ENCODE measurements at regions of chr5 and their contacts with region 1.

Region 1: DNA sequence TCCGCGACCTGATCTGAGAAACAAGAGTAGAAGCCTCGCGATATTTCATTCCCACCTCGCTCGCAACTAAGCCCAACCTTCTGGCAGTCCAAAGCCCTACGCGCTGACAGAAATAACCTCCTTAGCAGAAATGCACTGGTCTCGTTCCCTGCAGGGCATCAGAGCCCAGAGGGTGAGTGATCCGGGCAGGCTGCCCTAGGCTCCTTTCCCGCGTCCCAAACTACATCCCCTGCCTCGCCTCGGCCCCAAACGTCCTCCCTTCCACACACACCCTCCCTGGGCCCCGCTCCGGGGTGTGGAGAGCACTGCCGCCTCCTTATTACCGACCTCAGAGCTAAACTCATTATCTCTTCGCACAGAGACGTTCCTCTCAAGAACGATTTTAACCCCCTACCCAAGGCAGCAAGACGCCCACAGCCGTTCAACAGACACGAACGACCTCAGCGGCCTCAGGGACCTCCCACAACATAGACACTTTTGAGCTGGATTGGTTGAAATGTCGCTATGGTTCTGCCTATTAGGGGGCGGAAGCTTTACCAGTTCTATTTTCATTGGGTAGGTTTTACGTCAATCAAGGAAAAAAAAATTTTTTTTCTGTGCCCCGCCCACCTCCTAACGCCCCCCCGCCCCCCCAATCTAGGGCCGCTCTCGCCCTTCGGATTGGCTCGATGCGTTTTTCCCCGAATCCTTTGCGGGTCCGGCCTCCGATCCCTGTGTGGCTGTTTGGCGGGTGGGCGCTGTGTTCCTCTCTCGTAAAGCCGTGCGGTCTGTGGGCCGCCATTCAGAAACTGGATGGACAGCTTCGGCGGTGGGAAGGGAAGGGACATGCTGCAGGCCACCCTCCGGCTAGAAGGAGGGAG is at the start of gene CETN3:
- DNase-seq: peak; percentile 94
- H3K4me3 Mint-ChIP-seq: no peak within 1 kb of the TSS
- H3K27ac Mint-ChIP-seq: no peak within 1 kb of the TSS
- H3K4me1 Mint-ChIP-seq: peaks cover 16% of the 10 kb centered on the region
- H3K27me3 Mint-ChIP-seq: no peaks in the 10 kb centered on the region
- total RNA-seq, gene CETN3: 49.8 to 51.8 TPM

Region 2: GRCh38 chr5:90529194-90529938 is 119.8 kb after region 1 on chr5 and contains the start of gene LYSMD3:
- CTCF ChIA-PET with region 1: interaction called, 9 read pairs
- POLR2A ChIA-PET with region 1: interaction called, 4 read pairs
- intact Hi-C with region 1: loop called (anchors 1 kb)
- DNase-seq: peak; percentile 97
- H3K4me3 Mint-ChIP-seq: peak within 1 kb of the TSS; percentile 100
- H3K27ac Mint-ChIP-seq: peak within 1 kb of the TSS; percentile 96
- H3K4me1 Mint-ChIP-seq: peaks cover 24% of the 10 kb centered on the region
- H3K27me3 Mint-ChIP-seq: peaks cover 10% of the 10 kb centered on the region
- total RNA-seq, gene LYSMD3: 12.6 to 13.0 TPM

Measured in activated CD4-positive, alpha-beta memory T cell treated with anti-CD3 and anti-CD28 coated beads for 36 hours (primary cell).